Sigmoid colon (tissue), 7 donors: ENCODE measurements at regions of chr13 and their contacts with region 1.

Region 1: GRCh38 chr13:36858290-36858689 is 39.3 kb downstream of the RFXAP start:
- DNase-seq: no peak
- H3K4me3 ChIP-seq: no peak overlapping the region
- H3K27ac ChIP-seq: no peak overlapping the region
- H3K4me1 ChIP-seq: peaks cover 0 to 8% (median 0%) of the 10 kb centered on the region in 4 donors
- H3K27me3 ChIP-seq: no peaks in the 10 kb centered on the region
- CTCF ChIP-seq: peak; percentile 13 to 51 (median 35)
- EP300 ChIP-seq: no peak
- POLR2A ChIP-seq: no peak

Region 2: DNA sequence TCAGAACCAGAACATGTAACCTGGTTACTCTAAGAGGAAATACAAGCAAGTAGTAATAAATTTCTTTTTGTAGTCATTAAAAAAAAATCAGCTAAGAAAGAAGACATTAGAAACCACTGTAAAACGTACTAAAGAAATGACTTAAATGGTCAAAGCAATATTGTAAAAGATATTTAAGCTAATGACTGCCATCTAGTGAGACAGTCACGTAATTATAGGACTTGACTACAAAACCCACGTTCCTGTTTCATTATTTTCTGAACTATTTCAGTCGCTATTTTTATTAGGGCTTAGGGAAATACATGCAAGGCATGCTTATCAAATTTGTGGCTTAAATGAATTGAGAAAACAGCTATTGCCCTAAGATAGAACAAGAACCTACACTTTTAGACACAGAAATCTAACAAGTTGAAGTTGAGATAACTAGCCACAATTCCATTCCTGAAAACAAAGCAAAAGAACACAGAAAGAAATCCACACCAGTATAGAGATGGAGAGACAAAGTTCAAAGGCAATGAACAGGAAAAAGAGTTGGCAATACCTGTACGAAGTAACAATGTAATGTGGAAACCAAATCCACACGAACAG is 123.0 kb after region 1 on chr13:
- intact Hi-C with region 1: loop called (anchors 1 kb)
- DNase-seq: no peak
- H3K4me3 ChIP-seq: no peak overlapping the region
- H3K27ac ChIP-seq: no peak overlapping the region
- H3K4me1 ChIP-seq: no peaks in the 10 kb centered on the region
- H3K27me3 ChIP-seq: no peaks in the 10 kb centered on the region
- CTCF ChIP-seq: peak in 3 of 4 experiments; percentile 8 to 49 (median 43)
- EP300 ChIP-seq: no peak
- POLR2A ChIP-seq: no peak